Ascending aorta (tissue), 2 donors: ENCODE measurements at regions of chr1 and their contacts with region 1.

Region 1: GRCh38 chr1:17236779-17237560 is 11.9 kb upstream of the PADI3 start:
- DNase-seq: peak; percentile 11 to 90
- H3K4me3 ChIP-seq: no peak overlapping the region
- H3K27ac ChIP-seq: no peak overlapping the region
- H3K4me1 ChIP-seq: peaks cover 0 to 4% of the 10 kb centered on the region in 2 donors
- H3K27me3 ChIP-seq: no peaks in the 10 kb centered on the region
- CTCF ChIP-seq: peak; percentile 81 to 89 (median 88)

Region 2: GRCh38 chr1:16888860-16889816 is 347.8 kb before region 1 on chr1:
- intact Hi-C with region 1: no loop called
- DNase-seq: peak; percentile 63 to 89
- H3K4me3 ChIP-seq: peak overlapping the region; percentile 68 to 87
- H3K27ac ChIP-seq: peak overlapping the region; percentile 88 to 94
- H3K4me1 ChIP-seq: peaks cover 4 to 9% of the 10 kb centered on the region in 2 donors
- H3K27me3 ChIP-seq: no peaks in the 10 kb centered on the region
- CTCF ChIP-seq: peak in 2 of 3 experiments; percentile 30 to 48

Region 3: GRCh38 chr1:17059739-17060460 is 177.1 kb before region 1 on chr1:
- intact Hi-C with region 1: loop called (anchors 5 kb)
- DNase-seq: no peak
- H3K4me3 ChIP-seq: no peak overlapping the region
- H3K27ac ChIP-seq: no peak overlapping the region
- H3K4me1 ChIP-seq: no peaks in the 10 kb centered on the region
- H3K27me3 ChIP-seq: no peaks in the 10 kb centered on the region
- CTCF ChIP-seq: peak; percentile 22 to 40 (median 37)